ENCODE measurements at regions of chr12 and their contacts with region 1.

Region 1: GRCh38 chr12:45166056-45166455 is 49.8 kb upstream of the ANO6 start:
- DNase-seq: no peak
- ATAC-seq: peak; percentile 14
- H3K4me3 ChIP-seq: no peak overlapping the region
- H3K27ac ChIP-seq: no peak overlapping the region
- H3K4me1 ChIP-seq: no peaks in the 10 kb centered on the region
- H3K27me3 ChIP-seq: no peaks in the 10 kb centered on the region
- CTCF ChIP-seq: no peak

Region 2: GRCh38 chr12:45234139-45234846 is 68.2 kb after region 1 on chr12:
- intact Hi-C with region 1: no loop called
- DNase-seq: no peak
- ATAC-seq: peak; percentile 66
- H3K4me3 ChIP-seq: no peak overlapping the region
- H3K27ac ChIP-seq: peak overlapping the region; percentile 74
- H3K4me1 ChIP-seq: peaks cover 42% of the 10 kb centered on the region
- H3K27me3 ChIP-seq: no peaks in the 10 kb centered on the region
- CTCF ChIP-seq: no peak

Region 3: GRCh38 chr12:45543906-45544315 is 377.9 kb after region 1 on chr12:
- intact Hi-C with region 1: loop called (anchors 10 kb)
- DNase-seq: no peak
- ATAC-seq: peak; percentile 95
- H3K4me3 ChIP-seq: no peak overlapping the region
- H3K27ac ChIP-seq: no peak overlapping the region
- H3K4me1 ChIP-seq: no peaks in the 10 kb centered on the region
- H3K27me3 ChIP-seq: no peaks in the 10 kb centered on the region
- CTCF ChIP-seq: peak; percentile 81